Sigmoid colon (tissue), 7 donors: ENCODE measurements at regions of chr9 and their contacts with region 1.

Region 1: GRCh38 chr9:112379177-112380101 is 469 bp upstream of the HSDL2 start:
- DNase-seq: peak; percentile 100
- H3K4me3 ChIP-seq: peak overlapping the region; percentile 73 to 92 (median 81)
- H3K27ac ChIP-seq: peak overlapping the region; percentile 91 to 98 (median 98)
- H3K4me1 ChIP-seq: peaks cover 0 to 49% (median 40%) of the 10 kb centered on the region in 4 donors
- H3K27me3 ChIP-seq: no peaks in the 10 kb centered on the region
- CTCF ChIP-seq: no peak
- EP300 ChIP-seq: no peak
- POLR2A ChIP-seq: peak; percentile 67 to 84

Region 2: GRCh38 chr9:111483862-111484571 is 895.4 kb before region 1 on chr9 and contains the start of gene ECPAS:
- intact Hi-C with region 1: loop called (anchors 5 kb)
- DNase-seq: peak; percentile 88
- H3K4me3 ChIP-seq: peak within 1 kb of the TSS; percentile 68 to 98 (median 90)
- H3K27ac ChIP-seq: peak within 1 kb of the TSS; percentile 98 to 100 (median 99)
- H3K4me1 ChIP-seq: peaks cover 0 to 38% (median 20%) of the 10 kb centered on the region in 4 donors
- H3K27me3 ChIP-seq: no peaks in the 10 kb centered on the region
- CTCF ChIP-seq: no peak
- EP300 ChIP-seq: no peak
- POLR2A ChIP-seq: peak in 1 of 2 donors; percentile 9
- total RNA-seq, gene ECPAS: 61.4 to 92.8 (median 75.0) TPM

Region 3: GRCh38 chr9:111720177-111720576 is 659.3 kb before region 1 on chr9:
- intact Hi-C with region 1: no loop called
- DNase-seq: no peak
- H3K4me3 ChIP-seq: no peak overlapping the region
- H3K27ac ChIP-seq: no peak overlapping the region
- H3K4me1 ChIP-seq: no peaks in the 10 kb centered on the region
- H3K27me3 ChIP-seq: no peaks in the 10 kb centered on the region
- CTCF ChIP-seq: no peak
- EP300 ChIP-seq: no peak
- POLR2A ChIP-seq: no peak

Region 4: DNA sequence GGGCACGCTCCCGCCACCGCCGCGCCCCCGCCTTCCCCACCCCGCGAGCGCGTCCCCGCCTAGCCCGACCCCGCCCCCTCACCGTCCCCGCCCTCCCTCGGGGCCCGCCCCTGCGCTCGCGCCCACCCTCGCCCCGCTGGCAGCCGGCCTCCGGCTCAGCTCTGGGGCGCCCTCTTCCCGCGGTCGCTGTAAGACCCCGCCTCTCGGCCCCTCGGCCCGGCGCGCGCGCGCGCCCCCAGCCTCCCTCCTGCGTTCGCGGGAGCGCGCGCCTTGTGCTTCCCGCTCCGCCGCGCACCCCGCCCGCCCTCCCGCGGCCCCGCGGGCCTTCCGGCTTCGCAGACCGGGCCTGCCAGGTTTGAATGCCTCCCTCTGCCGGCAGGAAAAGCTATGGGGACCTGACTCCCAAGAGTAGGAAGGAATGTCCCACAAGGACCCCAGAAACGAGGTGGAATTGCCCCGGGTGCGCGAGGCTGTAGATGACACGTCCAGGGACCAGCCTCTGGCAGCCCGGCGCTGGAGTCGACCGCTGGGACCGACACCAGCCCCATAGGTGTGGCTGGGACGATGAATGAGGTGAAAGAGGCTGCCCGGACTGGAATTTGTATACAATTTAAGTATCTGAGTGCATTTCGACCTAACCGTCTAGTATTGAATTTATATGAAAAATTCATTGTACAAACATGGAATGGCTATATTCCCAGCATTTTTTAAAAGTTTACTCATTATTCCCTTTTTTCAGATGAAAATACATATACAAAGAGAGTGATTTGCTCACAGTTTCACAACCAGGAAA is 45.6 kb before region 1 on chr9:
- intact Hi-C with region 1: loop called (anchors 1 kb)
- DNase-seq: peak; percentile 97
- H3K4me3 ChIP-seq: peak overlapping the region; percentile 59 to 99 (median 79)
- H3K27ac ChIP-seq: peak overlapping the region; percentile 94 to 99 (median 98)
- H3K4me1 ChIP-seq: peaks cover 2 to 15% (median 11%) of the 10 kb centered on the region in 4 donors
- H3K27me3 ChIP-seq: no peaks in the 10 kb centered on the region
- CTCF ChIP-seq: peak; percentile 25 to 69 (median 43)
- EP300 ChIP-seq: no peak
- POLR2A ChIP-seq: no peak

Region 5: DNA sequence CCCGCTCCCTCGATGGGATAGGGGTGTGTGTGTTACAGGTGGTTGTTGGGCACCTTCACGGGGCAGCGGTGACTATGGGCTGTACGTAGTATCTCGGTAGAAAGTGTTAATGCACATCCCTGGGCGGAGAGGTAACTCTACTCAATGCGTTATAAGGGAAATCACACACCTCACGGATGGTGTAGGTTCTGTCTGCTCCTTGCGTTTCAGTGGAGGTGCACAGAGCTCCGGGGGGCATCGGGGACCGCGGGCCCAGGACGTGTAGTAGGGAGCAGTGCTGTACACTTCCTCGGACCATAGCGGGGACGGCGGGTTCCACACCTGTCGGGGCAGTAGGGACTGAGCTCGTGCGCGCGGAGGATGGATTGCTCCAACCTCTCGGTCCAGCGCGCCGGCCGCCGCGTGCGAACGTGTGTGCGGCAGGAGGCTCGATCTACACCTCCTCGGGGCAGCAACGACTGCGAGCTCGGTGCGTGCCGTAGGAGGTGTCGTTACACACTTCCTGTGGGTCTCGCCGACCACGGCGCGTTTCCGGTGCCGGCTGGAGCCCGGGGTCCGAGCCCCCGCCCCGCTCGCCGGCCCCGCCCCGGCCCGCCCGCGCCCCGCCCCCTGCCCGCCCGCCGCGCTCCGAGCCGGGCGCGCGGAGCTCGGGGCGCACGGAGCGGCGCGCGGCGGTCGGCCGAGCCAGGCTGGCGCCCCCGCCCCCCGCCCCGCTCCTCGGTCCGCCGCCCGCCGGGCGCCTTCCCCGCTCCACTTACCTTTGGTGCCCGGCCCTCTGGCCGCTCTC is 107.0 kb after region 1 on chr9 and contains the start of gene KIAA1958:
- intact Hi-C with region 1: loop called (anchors 5 kb)
- DNase-seq: peak; percentile 89
- H3K4me3 ChIP-seq: peak within 1 kb of the TSS; percentile 72 to 95 (median 92)
- H3K27ac ChIP-seq: peak within 1 kb of the TSS; percentile 75 to 85 (median 80)
- H3K4me1 ChIP-seq: peaks cover 0 to 13% (median 8%) of the 10 kb centered on the region in 4 donors
- H3K27me3 ChIP-seq: no peaks in the 10 kb centered on the region
- CTCF ChIP-seq: no peak
- EP300 ChIP-seq: no peak
- POLR2A ChIP-seq: peak in 1 of 2 donors; percentile 32
- total RNA-seq, gene KIAA1958: 4.3 to 8.0 (median 5.1) TPM

Region 6: GRCh38 chr9:112717661-112718341 is 338.4 kb after region 1 on chr9 and contains the start of gene INIP:
- intact Hi-C with region 1: loop called (anchors 5 kb)
- DNase-seq: peak; percentile 97
- H3K4me3 ChIP-seq: peak within 1 kb of the TSS; percentile 60 to 89 (median 73)
- H3K27ac ChIP-seq: peak within 1 kb of the TSS; percentile 87 to 93 (median 88)
- H3K4me1 ChIP-seq: peaks cover 0 to 8% (median 7%) of the 10 kb centered on the region in 4 donors
- H3K27me3 ChIP-seq: no peaks in the 10 kb centered on the region
- CTCF ChIP-seq: no peak
- EP300 ChIP-seq: peak in 1 of 4 donors; percentile 27
- POLR2A ChIP-seq: peak; percentile 45 to 82
- total RNA-seq, gene INIP: 10.0 to 16.8 (median 12.3) TPM

Region 7: DNA sequence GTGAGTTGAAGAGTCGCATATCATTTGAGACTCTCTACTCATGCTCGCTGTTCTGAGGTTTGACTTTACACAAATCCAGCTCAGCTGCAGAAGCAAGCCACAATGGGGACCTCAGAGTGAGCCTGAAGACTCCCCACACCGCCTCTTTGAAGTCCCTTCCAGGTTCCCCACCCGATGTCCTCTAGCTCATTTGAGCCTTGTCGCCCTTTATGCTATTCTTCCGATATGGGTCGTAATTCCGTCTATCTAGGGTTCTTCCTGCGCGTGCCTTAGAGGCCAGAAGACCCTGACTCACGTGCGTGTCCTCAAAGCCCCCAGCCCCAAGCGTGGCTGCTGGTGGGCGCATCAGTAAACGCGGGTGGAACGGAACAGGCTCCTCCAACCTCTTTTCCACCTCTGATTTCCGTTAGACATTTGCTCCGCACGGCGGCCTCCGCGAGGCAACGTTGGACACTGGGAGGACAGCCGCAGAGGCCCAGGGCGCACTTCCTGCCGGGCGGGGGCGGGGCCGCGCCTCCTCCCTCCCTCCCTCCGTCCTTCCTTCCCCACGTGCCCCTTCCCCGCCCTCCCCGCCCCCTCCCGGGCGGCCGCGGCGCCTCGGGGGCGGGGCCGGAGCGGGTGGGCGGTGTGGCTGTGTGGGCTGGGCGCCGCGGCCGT is 370.8 kb after region 1 on chr9 and contains the start of gene SNX30:
- intact Hi-C with region 1: loop called (anchors 1 kb)
- DNase-seq: peak; percentile 96
- H3K4me3 ChIP-seq: peak within 1 kb of the TSS; percentile 93 to 99 (median 97)
- H3K27ac ChIP-seq: peak within 1 kb of the TSS; percentile 82 to 90 (median 88)
- H3K4me1 ChIP-seq: peaks cover 0 to 48% (median 43%) of the 10 kb centered on the region in 4 donors
- H3K27me3 ChIP-seq: no peaks in the 10 kb centered on the region
- CTCF ChIP-seq: peak in 1 of 4 experiments; percentile 9
- EP300 ChIP-seq: no peak
- POLR2A ChIP-seq: peak; percentile 51 to 67
- total RNA-seq, gene SNX30: 6.4 to 10.0 (median 8.2) TPM